ENCODE measurements at regions of chr17 and their contacts with region 1.

Region 1: DNA sequence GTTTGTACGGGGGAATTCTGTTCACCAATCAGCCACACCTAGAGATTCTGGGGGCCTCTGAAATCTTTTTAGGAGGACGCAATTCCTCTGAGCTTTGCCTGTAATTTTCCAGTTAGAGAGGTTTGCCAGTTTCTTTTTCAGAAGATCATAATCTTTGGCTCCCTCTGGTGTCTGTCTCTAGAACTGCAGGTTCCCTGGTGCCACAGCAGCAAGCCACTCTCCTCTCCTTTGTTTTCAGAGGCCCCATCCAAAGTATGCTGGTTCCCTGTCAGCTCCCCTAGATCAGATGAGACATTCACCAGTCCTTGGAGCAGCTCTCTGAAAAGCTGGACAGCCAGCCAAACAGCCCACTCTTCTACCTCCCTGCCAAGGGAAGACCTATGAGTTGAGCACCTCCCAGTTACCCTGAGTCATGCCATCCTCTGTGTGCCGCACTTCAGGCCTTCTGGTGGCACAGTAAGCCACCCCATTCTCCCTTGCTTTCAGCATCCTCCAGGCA is 36.1 kb downstream of the RNF112 start:
- DNase-seq: peak; percentile 49
- H3K4me3 ChIP-seq: no peak overlapping the region
- H3K27ac ChIP-seq: peak overlapping the region; percentile 59
- H3K27me3 ChIP-seq: no peaks in the 10 kb centered on the region
- CTCF ChIP-seq: peak; percentile 91

Region 2: GRCh38 chr17:19274893-19275292 is 172.2 kb before region 1 on chr17:
- CTCF ChIA-PET with region 1: no interaction called
- POLR2A ChIA-PET with region 1: no interaction called
- DNase-seq: no peak
- H3K4me3 ChIP-seq: no peak overlapping the region
- H3K27ac ChIP-seq: no peak overlapping the region
- H3K27me3 ChIP-seq: no peaks in the 10 kb centered on the region
- CTCF ChIP-seq: no peak

Region 3: DNA sequence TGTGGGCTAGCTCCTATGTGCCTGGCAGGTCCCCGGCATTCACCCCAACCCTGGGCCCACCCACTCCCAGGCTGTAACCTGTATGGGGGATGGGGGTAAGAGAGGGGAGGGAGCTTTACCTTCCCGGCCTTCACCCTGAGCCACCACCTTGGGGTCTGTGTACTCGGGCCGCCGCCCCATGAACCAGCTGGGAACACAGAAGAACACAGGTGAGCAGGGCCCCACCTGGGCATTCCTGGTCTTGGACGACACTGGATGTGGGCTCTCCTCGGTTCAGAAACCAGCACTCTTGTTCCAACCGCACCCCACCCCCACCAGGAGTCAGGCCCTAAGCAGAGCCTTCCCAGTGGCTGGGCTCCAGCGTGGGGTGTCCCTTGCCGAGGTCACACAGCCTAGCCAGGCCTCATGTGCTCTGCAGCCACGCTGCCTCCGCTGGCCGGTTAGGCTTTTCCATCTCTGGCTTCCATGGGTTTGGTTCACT is 103.4 kb before region 1 on chr17:
- CTCF ChIA-PET with region 1: no interaction called
- POLR2A ChIA-PET with region 1: no interaction called
- DNase-seq: no peak
- H3K4me3 ChIP-seq: no peak overlapping the region
- H3K27ac ChIP-seq: no peak overlapping the region
- H3K27me3 ChIP-seq: no peaks in the 10 kb centered on the region
- CTCF ChIP-seq: no peak

Region 4: DNA sequence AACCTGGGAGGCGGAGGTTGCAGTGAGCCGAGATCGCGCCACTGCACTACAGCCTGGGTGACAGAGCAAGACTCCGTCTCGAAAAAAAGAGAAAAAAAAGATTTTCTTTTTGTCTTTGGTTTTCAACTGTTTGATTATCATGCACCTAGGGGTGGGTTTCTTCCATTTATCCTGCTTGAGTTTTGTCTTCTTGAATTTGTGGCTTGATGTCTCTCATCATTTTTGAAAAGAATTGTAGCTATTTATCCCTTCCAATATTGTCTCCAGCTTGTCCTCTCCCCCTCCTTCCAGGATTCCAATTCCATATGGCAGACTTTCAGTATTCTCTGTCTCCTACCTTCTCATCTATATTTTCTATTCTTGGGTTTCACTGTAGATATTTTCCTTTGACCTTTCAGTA is 92.4 kb before region 1 on chr17:
- CTCF ChIA-PET with region 1: interaction called, 12 read pairs
- POLR2A ChIA-PET with region 1: no interaction called
- DNase-seq: no peak
- H3K4me3 ChIP-seq: no peak overlapping the region
- H3K27ac ChIP-seq: no peak overlapping the region
- H3K27me3 ChIP-seq: no peaks in the 10 kb centered on the region
- CTCF ChIP-seq: no peak

Region 5: DNA sequence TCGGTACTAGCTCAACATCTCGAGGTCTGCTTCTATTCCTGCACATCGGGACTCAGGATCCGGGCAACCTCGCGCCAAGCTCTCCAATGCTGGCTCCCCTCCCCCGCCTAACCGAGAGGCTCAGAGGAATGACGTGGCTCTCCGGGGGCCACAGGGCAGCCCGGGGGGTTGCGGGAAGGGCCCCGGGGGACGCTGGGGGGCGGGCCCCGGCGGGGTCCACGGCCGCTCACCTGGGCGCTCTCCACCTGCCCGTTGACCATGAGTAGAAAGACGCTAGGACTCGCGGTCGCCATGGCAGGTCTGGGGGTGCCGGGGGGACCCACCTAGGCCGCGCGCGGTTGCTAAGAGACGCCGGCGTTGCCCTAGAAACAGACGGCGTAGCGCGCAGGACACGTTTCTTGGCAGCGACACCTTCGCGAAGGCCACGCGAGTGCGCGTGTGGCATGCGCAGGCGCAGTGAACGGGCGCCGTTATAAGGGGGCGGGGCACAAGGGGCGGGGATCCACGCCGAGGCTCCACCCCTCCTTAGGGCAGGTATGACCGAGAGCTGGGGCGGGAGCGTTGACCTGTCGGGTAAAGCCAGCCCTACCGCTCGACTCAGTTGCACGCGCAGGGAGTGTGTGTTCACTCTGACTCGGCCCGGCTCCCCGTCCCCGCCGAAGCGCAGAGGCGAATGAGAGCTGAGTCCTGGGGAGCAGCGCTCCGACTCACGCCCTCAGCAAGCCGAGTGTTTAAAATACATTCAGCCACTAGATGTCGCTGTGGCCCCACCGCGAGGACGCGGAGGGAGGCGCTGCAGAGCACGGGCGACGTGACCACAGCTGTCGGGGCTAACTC is 84.6 kb before region 1 on chr17 and contains the start of gene B9D1:
- CTCF ChIA-PET with region 1: interaction called, 99 read pairs
- POLR2A ChIA-PET with region 1: interaction called, 12 read pairs
- DNase-seq: peak; percentile 84
- H3K4me3 ChIP-seq: peak within 1 kb of the TSS; percentile 87
- H3K27ac ChIP-seq: peak within 1 kb of the TSS; percentile 65
- H3K27me3 ChIP-seq: no peaks in the 10 kb centered on the region
- CTCF ChIP-seq: peak; percentile 84
- polyA plus RNA-seq, gene B9D1: 35.2 and 45.8 TPM in 2 replicates

Region 6: GRCh38 chr17:19377602-19378392 is 69.3 kb before region 1 on chr17:
- CTCF ChIA-PET with region 1: interaction called, 26 read pairs
- POLR2A ChIA-PET with region 1: interaction called, 9 read pairs
- DNase-seq: peak; percentile 98
- H3K4me3 ChIP-seq: peak overlapping the region; percentile 86
- H3K27ac ChIP-seq: peak overlapping the region; percentile 99
- H3K27me3 ChIP-seq: no peaks in the 10 kb centered on the region
- CTCF ChIP-seq: no peak

Region 7: GRCh38 chr17:19384701-19385411 is 62.3 kb before region 1 on chr17:
- CTCF ChIA-PET with region 1: interaction called, 18 read pairs
- POLR2A ChIA-PET with region 1: interaction called, 19 read pairs
- DNase-seq: peak; percentile 88
- H3K4me3 ChIP-seq: peak overlapping the region; percentile 76
- H3K27ac ChIP-seq: peak overlapping the region; percentile 78
- H3K27me3 ChIP-seq: no peaks in the 10 kb centered on the region
- CTCF ChIP-seq: no peak

Region 8: DNA sequence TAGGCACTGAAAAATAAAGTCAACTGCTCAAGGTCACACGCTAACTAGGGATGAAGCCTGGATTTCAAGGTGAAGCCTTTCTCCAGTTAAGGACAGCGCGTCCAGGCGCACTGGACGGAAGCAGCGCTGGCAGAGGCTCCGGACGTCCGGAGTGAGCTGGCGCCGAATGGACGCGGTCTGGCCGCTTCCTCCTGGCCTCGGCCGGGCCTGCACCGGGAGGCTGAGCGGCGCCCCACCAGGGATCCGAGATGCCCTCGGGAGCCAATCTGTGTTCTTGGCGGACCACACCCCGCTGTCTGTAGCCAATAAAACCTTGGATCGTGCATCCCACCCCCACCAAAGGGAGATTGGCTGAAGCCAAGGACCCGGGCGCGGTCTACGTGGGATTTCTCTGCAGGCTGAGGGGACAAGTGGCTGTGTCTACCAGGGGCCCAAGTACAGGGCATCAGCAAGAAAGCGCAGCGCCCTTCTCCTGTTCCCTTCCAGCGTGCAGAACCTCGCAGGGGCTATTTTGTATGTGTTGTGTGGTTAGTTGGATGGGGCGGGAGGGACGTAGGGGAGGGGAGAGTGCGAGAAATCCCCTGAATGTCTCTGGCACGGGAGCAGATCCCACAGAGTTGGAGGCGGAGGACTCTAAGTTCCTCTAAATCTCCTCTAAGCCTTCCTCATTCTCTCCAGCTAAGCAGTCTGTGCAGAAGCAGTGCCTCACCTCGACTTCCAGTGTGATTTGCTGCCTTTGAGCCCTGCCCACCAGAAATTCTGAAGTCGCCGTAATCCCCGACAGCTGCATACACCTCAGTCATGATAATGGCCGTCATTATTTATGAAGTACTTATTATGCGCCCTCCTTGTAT is 533.0 kb after region 1 on chr17:
- CTCF ChIA-PET with region 1: no interaction called
- POLR2A ChIA-PET with region 1: no interaction called
- DNase-seq: no peak
- H3K4me3 ChIP-seq: no peak overlapping the region
- H3K27ac ChIP-seq: no peak overlapping the region
- H3K27me3 ChIP-seq: no peaks in the 10 kb centered on the region
- CTCF ChIP-seq: no peak